ENCODE measurements at regions of chr6 and their contacts with region 1.

Region 1: DNA sequence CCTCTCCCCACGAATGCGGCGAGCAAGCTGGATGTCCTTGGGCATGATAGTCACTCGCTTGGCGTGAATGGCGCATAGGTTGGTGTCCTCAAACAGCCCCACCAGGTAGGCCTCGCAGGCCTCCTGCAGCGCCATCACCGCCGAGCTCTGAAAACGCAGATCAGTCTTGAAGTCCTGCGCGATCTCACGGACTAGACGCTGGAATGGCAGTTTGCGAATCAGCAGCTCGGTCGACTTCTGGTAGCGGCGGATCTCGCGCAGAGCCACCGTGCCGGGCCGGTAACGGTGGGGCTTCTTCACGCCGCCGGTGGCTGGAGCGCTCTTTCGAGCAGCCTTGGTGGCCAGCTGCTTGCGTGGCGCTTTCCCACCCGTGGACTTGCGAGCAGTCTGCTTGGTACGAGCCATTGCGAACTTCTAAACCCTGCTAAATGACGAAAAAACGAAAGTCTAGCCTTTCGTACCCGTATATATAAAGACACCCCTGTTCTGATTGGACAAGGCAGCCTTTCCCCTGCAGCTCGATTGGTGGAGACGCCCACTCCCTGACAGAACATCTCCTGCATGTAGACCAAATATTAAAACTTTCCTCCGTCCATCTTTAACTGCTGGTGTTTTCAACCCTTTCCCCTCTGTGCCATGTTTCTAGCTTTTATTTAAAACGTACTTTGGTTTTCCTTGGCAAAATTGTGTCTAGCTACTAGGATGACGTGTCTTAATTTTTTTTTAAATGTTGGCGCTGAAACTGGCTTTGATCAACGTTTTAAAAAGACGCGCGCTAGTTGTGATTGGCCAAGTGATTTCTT is 109.8 kb downstream of the HFE start:
- DNase-seq: peak; percentile 94
- H3K4me3 Mint-ChIP-seq: peak overlapping the region; percentile 93
- H3K27ac Mint-ChIP-seq: peak overlapping the region; percentile 96
- H3K4me1 Mint-ChIP-seq: peaks cover 28% of the 10 kb centered on the region
- H3K27me3 Mint-ChIP-seq: no peaks in the 10 kb centered on the region
- CTCF ChIP-seq: no peak

Region 2: DNA sequence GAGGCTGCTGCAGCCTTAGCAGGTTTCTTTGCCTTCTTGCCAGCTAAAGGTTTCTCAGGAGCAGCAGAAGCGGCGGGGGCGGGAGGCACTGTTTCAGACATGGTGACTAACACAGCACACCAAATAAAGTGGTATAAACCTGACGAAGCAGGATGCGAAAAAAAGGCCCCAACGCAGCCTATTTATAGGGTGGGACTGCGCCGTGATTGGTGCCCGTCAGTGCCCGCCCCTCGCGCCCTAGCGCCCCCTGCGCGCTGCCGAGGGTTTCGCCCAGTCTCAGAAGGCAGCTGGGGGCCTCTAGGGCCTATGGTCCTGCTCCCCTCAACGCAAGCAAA is 179.4 kb before region 1 on chr6:
- CTCF ChIA-PET with region 1: no interaction called
- POLR2A ChIA-PET with region 1: interaction called, 20 read pairs
- intact Hi-C with region 1: no loop called
- DNase-seq: peak; percentile 93
- H3K4me3 Mint-ChIP-seq: peak overlapping the region; percentile 75
- H3K27ac Mint-ChIP-seq: peak overlapping the region; percentile 73
- H3K4me1 Mint-ChIP-seq: no peaks in the 10 kb centered on the region
- H3K27me3 Mint-ChIP-seq: no peaks in the 10 kb centered on the region
- CTCF ChIP-seq: peak; percentile 26

Region 3: DNA sequence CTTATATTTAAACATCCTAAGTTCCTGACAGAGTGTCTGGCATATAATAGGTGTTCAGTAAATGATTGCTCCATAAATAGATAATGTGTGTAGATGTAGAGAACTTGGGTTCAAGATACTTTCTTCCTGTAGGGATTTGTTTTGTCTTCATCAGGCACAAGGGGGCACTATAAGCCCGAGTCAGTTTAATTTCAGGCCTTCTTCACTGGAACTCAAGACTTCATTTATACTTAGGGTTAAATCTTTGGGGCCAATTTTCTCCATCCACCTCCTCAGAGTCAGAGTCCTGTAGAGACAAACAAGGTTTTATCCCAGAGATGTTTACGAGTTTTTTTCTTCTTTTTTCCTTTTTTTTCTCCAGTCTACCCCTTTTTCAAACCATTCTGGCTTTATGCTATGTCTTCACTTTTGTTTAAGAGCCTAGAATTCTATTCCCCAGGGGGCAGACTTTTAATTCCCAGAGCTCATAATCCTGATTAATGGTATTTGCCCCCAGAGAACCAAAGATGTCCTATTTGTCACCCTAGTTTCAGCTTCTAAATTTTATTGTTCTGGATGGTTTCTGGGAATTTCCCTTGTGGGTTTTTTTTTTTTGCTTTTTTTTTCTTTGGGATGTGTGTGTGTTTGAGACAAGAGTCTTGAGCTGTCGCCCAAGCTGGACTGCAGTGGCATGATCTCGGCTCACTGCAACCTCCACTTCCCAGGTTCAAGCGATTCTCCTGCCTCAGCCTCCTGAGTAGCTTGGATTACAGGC is 21.4 kb before region 1 on chr6:
- CTCF ChIA-PET with region 1: interaction called, 5 read pairs
- POLR2A ChIA-PET with region 1: interaction called, 378 read pairs
- intact Hi-C with region 1: no loop called
- DNase-seq: peak; percentile 82
- H3K4me3 Mint-ChIP-seq: peak overlapping the region; percentile 23
- H3K27ac Mint-ChIP-seq: peak overlapping the region; percentile 70
- H3K4me1 Mint-ChIP-seq: peaks cover 28% of the 10 kb centered on the region
- H3K27me3 Mint-ChIP-seq: no peaks in the 10 kb centered on the region
- CTCF ChIP-seq: peak; percentile 70

Region 4: DNA sequence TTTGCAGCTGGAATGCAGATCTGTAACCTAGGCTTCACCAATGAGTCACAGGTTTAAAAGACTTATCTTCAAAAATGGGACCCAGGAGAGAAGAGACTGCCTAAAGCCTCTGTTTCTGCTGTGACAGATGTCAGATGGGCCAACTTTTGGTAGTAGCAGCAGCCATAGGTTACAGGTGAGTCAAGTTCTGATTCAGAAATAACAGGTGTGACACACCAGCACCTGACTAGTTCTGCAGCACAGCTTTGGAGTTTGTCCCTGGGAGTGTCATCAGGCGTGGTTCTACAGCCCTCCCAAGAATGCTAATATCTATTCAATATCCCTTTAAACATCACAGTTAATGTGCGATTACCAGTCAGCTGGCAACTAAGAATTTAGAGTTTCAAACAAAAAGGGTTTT is 46.1 kb after region 1 on chr6:
- CTCF ChIA-PET with region 1: no interaction called
- POLR2A ChIA-PET with region 1: interaction called, 108 read pairs
- intact Hi-C with region 1: no loop called
- DNase-seq: peak; percentile 14
- H3K4me3 Mint-ChIP-seq: no peak overlapping the region
- H3K27ac Mint-ChIP-seq: no peak overlapping the region
- H3K4me1 Mint-ChIP-seq: no peaks in the 10 kb centered on the region
- H3K27me3 Mint-ChIP-seq: no peaks in the 10 kb centered on the region
- CTCF ChIP-seq: no peak

Region 5: DNA sequence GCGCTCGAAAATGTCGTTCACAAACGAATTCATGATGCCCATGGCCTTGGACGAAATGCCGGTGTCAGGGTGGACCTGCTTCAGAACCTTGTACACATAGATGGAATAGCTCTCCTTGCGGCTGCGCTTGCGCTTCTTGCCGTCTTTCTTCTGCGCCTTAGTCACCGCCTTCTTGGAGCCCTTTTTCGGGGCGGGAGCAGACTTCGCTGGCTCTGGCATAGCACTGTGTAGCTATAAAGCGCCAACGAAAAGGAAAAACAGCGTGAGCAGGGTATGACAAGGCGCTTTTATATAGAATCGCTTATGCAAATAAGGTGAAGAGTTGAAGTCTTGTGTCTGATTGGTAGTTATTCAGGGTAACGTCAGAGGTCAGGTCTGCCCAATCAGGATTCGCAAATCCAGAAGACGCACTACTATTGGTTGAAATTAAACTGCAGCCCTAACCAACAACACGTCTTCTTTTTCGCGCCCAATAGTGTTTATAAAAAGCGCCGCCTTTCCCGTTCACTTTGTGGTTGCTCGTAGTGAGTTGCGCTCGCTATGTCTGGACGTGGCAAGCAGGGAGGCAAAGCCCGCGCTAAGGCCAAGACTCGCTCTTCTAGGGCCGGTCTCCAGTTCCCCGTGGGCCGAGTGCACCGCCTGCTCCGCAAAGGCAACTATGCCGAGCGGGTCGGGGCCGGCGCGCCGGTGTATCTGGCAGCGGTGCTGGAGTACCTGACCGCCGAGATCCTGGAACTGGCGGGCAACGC is 935.7 kb after region 1 on chr6:
- CTCF ChIA-PET with region 1: no interaction called
- POLR2A ChIA-PET with region 1: interaction called, 100 read pairs
- intact Hi-C with region 1: no loop called
- DNase-seq: peak; percentile 99
- H3K4me3 Mint-ChIP-seq: no peak overlapping the region
- H3K27ac Mint-ChIP-seq: no peak overlapping the region
- H3K4me1 Mint-ChIP-seq: peaks cover 11% of the 10 kb centered on the region
- H3K27me3 Mint-ChIP-seq: no peaks in the 10 kb centered on the region
- CTCF ChIP-seq: no peak

Region 6: DNA sequence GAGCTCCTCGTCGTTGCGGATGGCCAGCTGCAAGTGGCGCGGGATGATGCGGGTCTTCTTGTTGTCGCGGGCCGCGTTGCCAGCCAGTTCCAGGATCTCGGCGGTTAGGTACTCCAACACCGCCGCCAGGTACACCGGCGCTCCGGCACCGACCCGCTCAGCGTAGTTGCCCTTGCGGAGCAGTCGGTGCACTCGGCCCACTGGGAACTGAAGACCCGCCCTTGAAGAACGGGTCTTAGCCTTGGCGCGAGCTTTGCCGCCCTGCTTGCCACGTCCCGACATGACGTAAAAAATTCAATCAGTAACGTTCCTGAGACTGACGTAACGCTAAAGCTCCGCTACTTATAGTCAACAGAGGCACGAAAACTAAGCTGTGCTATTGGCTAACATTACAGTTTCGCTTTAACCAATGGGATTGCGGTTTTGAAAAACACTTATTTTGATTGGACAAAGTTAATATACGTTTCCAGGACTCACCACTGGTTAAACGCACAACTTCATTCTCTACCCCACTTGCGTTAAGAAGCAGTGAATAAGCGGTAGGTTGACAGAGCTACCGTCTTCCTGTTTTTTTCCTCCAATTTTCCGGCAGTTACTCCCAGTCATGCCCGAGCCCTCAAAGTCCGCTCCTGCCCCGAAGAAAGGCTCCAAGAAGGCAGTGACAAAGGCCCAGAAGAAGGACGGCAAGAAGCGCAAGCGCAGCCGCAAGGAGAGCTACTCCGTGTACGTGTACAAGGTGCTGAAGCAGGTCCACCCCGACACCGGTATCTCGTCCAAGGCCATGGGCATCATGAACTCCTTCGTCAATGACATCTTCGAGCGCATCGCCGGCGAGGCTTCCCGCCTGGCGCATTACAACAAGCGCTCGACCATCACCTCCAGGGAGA is 1641.3 kb after region 1 on chr6:
- CTCF ChIA-PET with region 1: no interaction called
- POLR2A ChIA-PET with region 1: interaction called, 147 read pairs
- intact Hi-C with region 1: no loop called
- DNase-seq: peak; percentile 98
- H3K4me3 Mint-ChIP-seq: no peak overlapping the region
- H3K27ac Mint-ChIP-seq: no peak overlapping the region
- H3K4me1 Mint-ChIP-seq: peaks cover 32% of the 10 kb centered on the region
- H3K27me3 Mint-ChIP-seq: no peaks in the 10 kb centered on the region
- CTCF ChIP-seq: no peak